Stomach (tissue), 19 donors: ENCODE measurements at regions of chr3 and their contacts with region 1.

Region 1: GRCh38 chr3:50611464-50612233 is at the start of gene CISH:
- DNase-seq: peak; percentile 94 to 98
- H3K4me3 ChIP-seq: peak within 1 kb of the TSS; percentile 59 to 83 (median 71)
- H3K27ac ChIP-seq: peak within 1 kb of the TSS; percentile 87 to 97 (median 91)
- H3K4me1 ChIP-seq: peaks cover 40 to 82% (median 76%) of the 10 kb centered on the region in 4 donors
- H3K27me3 ChIP-seq: no peaks in the 10 kb centered on the region
- CTCF ChIP-seq: peak in 2 of 7 experiments; percentile 5 to 8
- EP300 ChIP-seq: no peak
- POLR2A ChIP-seq: peak in 1 of 4 donors; percentile 46
- total RNA-seq, gene CISH: 1.8 to 5.7 (median 3.6) TPM

Region 2: DNA sequence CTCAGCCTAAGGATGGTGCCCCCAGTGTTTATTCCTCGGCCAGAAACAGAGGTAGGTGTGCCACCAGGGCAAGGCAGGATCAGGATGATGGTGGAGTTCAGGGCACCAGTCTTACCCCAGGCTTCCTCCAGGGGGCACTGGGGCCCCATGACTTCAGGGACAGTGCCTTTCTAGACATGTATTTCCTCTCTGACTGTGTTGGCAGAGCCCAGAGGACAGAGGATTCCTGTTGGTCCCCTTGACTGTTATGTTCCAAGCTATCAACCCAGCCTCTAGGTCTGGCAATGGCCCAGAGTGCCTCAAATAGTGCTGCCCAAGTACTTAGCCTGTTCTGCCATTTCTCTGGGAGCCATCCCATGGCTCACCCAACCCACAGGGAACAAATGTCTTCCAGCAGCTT is 39.5 kb before region 1 on chr3:
- intact Hi-C with region 1: loop called (anchors 5 kb)
- DNase-seq: peak; percentile 80 to 91
- H3K4me3 ChIP-seq: no peak overlapping the region
- H3K27ac ChIP-seq: peak overlapping the region in 4 of 5 donors; percentile 24 to 86 (median 38)
- H3K4me1 ChIP-seq: peaks cover 23 to 51% (median 34%) of the 10 kb centered on the region in 4 donors
- H3K27me3 ChIP-seq: no peaks in the 10 kb centered on the region
- CTCF ChIP-seq: peak in 5 of 7 experiments; percentile 88 to 95 (median 90)
- EP300 ChIP-seq: no peak
- POLR2A ChIP-seq: no peak